Right cardiac atrium (tissue), 5 donors: ENCODE measurements at regions of chr14 and their contacts with region 1.

Region 1: GRCh38 chr14:70640938-70641547 is 673 bp upstream of the TTC9 start:
- DNase-seq: peak in 1 of 3 donors; percentile 20
- ATAC-seq: peak; percentile 50 to 62
- H3K4me3 ChIP-seq: peak overlapping the region; percentile 96
- H3K27ac ChIP-seq: no peak overlapping the region
- H3K4me1 ChIP-seq: no peaks in the 10 kb centered on the region
- H3K27me3 ChIP-seq: no peaks in the 10 kb centered on the region

Region 2: DNA sequence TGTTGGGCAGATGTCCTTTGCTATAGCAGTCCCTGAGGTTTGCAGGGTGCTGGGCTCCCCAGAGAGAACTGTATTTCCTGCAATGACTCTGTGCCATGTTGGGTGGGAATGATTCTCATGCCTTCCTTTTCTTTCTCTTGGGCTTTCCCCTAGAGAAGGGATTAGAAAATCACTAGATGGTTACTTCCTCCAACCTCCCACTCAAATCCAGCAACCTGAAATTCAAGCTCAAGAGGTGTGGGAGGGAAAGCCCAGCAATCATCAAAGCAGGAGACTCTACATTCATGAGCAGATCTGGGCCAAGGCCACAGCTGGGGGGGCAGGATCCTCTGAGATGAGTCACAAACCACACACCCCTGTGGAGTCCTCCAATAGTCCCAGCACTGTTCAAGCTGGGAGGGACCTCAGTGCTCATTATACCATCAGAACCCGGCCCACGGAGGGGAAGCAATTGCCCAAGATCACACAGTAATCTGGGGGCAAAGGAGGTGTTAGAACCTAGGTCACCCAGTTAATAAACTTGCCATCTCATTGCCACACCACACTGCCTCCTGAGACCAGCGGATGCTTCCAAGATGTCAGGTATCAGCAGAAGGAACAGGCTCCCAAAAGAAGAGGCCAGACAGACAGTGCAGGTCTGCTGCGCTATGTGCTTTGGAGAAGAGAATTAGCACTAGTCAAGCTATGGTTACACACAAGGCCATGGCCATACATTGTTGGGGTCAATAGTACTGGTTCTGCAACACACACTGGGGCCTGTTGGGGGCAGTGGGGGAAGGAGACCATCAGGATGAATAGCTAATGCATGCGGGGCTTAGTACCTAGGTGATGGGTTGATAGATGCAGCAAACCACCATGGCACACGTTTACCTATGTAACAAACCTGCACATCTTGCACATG is 66.3 kb after region 1 on chr14:
- intact Hi-C with region 1: loop called in 1 of 4 experiments (anchors 10 kb)
- DNase-seq: no peak
- ATAC-seq: peak; percentile 26 to 70
- H3K4me3 ChIP-seq: no peak overlapping the region
- H3K27ac ChIP-seq: no peak overlapping the region
- H3K4me1 ChIP-seq: no peaks in the 10 kb centered on the region
- H3K27me3 ChIP-seq: no peaks in the 10 kb centered on the region